Activated T-helper 1 cell treated with anti-CD3 and anti-CD28 coated beads, Interleukin-12 subunit alpha, Interleukin-12 subunit beta, Interleukin-2, Interleukin-4 antibody, amounts not matched to agents 30 ng/mL and 10 ng/mL and 1 ng/mL, durations not matched to agents 14 hours and 24 hours and 36 hours (primary cell): ENCODE measurements at regions of chr2 and their contacts with region 1.

Region 1: DNA sequence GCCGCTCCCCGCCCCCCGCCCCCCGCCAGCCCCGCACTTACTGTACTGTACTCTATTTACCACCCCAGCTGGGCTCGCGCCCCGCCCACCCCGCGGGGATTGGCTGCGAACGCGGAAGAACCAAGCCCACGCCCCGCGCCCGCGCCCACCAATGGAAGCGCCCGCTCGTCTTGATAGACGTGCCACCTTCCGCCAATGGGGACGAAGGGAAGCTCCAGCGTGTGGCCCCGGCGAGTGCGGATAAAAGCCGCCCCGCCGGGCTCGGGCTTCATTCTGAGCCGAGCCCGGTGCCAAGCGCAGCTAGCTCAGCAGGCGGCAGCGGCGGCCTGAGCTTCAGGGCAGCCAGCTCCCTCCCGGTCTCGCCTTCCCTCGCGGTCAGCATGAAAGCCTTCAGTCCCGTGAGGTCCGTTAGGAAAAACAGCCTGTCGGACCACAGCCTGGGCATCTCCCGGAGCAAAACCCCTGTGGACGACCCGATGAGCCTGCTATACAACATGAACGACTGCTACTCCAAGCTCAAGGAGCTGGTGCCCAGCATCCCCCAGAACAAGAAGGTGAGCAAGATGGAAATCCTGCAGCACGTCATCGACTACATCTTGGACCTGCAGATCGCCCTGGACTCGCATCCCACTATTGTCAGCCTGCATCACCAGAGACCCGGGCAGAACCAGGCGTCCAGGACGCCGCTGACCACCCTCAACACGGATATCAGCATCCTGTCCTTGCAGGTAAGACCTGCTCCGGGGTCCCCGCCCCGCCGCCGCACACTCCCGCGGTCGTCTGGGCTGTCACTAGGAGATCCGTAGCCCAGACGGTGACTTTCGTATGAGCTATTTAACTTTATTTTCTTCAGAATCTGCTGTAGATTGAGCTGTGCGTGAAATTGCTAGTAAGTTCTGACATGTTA is at the start of gene ID2:
- DNase-seq: peak; percentile 99
- H3K4me3 Mint-ChIP-seq: peak within 1 kb of the TSS; percentile 99
- H3K27ac Mint-ChIP-seq: peak within 1 kb of the TSS; percentile 97
- H3K4me1 Mint-ChIP-seq: peaks cover 41% of the 10 kb centered on the region
- H3K27me3 Mint-ChIP-seq: peaks cover 14% of the 10 kb centered on the region
- total RNA-seq, gene ID2: 301 and 306 TPM in 2 replicates

Region 2: GRCh38 chr2:7118606-7119503 is 1563.2 kb before region 1 on chr2:
- intact Hi-C with region 1: loop called (anchors 2 kb)
- DNase-seq: no peak
- H3K4me3 Mint-ChIP-seq: no peak overlapping the region
- H3K27ac Mint-ChIP-seq: no peak overlapping the region
- H3K4me1 Mint-ChIP-seq: no peaks in the 10 kb centered on the region
- H3K27me3 Mint-ChIP-seq: peaks cover 3% of the 10 kb centered on the region

Region 3: GRCh38 chr2:7567646-7568045 is 1114.4 kb before region 1 on chr2:
- intact Hi-C with region 1: loop called (anchors 1 kb)
- DNase-seq: peak; percentile 47
- H3K4me3 Mint-ChIP-seq: peak overlapping the region; percentile 25
- H3K27ac Mint-ChIP-seq: peak overlapping the region; percentile 90
- H3K4me1 Mint-ChIP-seq: peaks cover 59% of the 10 kb centered on the region
- H3K27me3 Mint-ChIP-seq: no peaks in the 10 kb centered on the region

Region 4: DNA sequence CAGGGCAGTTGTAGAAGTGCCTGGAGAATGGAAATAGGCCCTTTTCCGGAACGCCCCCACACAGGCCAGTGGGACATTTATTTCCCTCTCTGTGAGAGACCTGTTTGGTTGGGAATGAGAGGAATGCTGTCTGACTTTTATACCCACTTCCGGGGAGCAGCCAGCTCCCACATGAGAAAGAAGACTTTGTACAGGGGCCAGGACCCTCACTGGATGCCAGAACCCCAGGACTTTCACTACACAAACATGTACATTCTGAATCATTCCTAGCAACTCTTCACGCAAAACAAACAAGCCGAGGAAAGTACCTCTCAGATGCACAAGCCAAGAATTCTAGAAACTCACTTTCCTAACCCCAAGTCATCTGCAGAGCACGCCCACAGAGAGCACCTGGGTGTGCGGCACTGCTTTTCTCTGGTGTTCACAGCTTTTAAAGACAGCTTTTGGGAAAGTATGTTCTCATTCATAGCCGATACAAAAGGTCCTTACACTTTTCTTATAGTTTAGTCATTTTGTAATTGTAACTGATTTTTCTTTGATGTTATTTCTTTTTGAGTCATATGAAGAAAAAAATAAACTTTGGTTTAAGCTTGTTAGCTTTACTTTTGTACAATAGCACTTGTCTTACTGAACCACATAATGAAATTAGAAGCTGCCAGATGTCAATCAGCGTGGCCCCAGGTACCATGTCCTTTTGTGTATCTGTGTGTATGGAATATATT is 856.3 kb before region 1 on chr2:
- intact Hi-C with region 1: loop called (anchors 1 kb)
- DNase-seq: peak; percentile 55
- H3K4me3 Mint-ChIP-seq: peak overlapping the region; percentile 23
- H3K27ac Mint-ChIP-seq: peak overlapping the region; percentile 97
- H3K4me1 Mint-ChIP-seq: peaks cover 41% of the 10 kb centered on the region
- H3K27me3 Mint-ChIP-seq: peaks cover 4% of the 10 kb centered on the region

Region 5: DNA sequence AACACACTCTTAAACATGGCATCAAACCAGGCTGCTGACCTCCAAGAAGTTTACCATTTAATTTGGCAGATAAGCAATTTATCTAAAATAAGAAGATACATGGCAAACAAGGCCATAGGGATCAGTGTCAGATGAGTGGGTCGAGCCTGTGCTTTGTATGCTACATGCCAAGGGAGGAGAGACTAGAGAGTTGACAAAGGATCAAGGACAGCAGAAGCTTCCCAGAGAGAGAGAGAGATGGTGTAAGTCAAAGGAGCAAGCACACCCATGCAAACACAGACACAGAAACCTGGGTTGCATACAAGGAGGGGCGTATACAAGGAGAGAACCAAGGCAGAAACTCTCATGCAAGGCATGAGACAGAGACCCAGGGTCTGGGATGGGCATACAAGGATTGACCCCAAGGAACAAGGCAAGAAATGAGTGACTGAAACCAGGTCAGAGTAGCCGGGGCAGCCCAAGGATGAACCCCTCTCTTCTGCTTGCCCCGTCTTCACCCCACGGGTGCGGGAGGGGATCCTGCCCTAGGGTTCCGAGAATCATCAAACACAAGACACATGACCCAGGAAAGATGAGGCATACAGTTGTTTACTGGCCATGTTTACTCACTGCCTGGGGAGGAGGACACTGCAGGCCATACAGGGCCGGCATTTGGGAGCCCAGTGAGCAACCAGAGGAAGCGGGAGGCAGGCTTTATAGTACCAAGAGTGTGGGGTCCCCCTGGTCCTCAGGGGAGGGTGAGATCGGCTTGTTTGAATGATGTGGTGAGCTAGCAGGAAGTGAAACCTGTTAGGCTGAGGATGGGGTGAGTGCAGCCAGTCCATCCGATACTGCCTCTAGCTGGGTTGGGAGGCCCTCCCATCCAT is 529.4 kb before region 1 on chr2:
- intact Hi-C with region 1: loop called (anchors 1 kb)
- DNase-seq: no peak
- H3K4me3 Mint-ChIP-seq: no peak overlapping the region
- H3K27ac Mint-ChIP-seq: peak overlapping the region; percentile 62
- H3K4me1 Mint-ChIP-seq: peaks cover 38% of the 10 kb centered on the region
- H3K27me3 Mint-ChIP-seq: no peaks in the 10 kb centered on the region

Region 6: GRCh38 chr2:8488001-8488738 is 193.9 kb before region 1 on chr2:
- intact Hi-C with region 1: loop called (anchors 10 kb)
- DNase-seq: peak; percentile 57
- H3K4me3 Mint-ChIP-seq: peak overlapping the region; percentile 75
- H3K27ac Mint-ChIP-seq: peak overlapping the region; percentile 86
- H3K4me1 Mint-ChIP-seq: peaks cover 61% of the 10 kb centered on the region
- H3K27me3 Mint-ChIP-seq: no peaks in the 10 kb centered on the region

Region 7: DNA sequence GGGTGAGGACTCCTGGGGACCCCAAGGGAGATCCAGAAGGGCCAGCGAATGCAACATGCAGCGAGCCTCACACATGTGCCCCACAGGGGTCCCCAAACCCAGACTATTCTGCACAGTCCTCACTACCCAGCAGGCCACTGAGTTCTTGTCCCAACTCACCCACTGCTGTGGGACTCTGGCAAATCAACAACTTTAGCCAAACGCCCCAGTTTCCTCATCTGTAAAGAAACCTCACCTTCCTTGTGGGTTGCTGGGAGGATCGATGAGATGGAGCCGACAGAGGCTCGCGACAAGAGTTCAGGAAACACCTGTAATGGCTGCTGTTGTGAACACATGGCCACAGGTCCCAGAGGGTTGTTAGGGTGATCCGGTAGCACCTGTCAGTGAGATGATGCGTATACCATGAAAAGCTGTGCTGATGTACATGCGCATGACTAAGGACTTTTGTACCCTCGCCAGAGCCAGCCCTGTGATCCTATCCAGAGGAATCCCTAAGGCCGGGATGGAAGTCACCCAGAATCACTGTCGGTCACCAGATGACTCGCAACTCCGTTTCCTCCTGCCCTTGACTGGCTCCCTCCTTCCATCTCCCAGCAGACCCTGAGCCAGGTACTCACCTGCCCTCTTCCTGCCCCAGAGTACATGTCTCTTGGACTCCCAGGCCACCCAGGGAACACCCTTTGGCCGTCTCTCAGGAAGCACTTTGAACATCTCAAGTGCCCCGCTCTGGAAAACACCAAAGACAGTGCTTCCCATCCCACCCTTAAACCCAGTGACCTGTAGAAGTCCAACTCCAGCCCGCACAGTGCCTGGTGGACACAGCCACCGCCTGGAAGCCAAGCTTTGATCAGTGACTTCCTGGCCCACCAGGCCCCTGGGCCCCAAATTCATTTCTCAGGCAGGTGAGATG is 103.4 kb before region 1 on chr2:
- intact Hi-C with region 1: no loop called
- DNase-seq: no peak
- H3K4me3 Mint-ChIP-seq: no peak overlapping the region
- H3K27ac Mint-ChIP-seq: no peak overlapping the region
- H3K4me1 Mint-ChIP-seq: peaks cover 50% of the 10 kb centered on the region
- H3K27me3 Mint-ChIP-seq: peaks cover 3% of the 10 kb centered on the region

Region 8: DNA sequence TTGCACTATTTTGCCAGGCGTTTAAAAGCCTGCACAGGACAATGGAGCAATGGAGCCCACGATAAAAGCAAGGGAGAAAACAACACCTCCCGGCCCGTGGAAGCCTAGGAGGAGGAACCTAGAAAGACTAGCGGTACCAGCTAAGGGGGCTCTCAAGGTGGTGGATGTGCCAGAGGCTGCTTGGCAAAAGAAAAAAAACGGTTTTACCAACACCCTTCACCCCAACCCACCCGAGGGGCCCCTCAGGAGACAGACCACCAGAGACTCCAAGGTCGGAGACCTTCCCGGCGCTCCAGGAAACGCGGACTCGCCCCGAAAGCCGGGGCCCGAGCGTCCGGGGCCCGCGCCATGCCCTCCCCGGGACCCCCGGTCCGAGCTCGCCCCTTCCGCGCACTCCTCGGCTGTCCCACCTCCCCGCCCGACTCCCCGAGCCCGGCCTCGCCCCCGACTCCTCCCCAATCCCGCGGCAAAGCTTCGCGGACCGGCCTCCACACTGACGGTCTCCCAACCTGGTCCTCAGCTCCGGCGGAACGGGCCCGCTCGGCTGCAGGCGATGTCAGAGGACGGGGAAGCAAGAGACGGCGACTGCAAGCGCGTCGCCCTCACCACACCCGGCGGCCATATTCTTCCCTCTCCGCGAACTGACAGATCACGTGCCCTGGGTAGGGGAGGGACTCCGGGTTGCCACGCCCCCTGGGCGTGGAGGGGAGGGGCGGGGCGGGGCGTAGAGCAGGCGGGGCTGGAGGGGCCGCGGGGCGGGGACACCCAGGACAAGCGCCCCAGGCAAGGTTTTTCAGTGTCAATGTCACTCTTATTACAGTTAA is 155.1 kb after region 1 on chr2 and contains the start of gene KIDINS220:
- intact Hi-C with region 1: loop called (anchors 5 kb)
- DNase-seq: peak; percentile 72
- H3K4me3 Mint-ChIP-seq: peak within 1 kb of the TSS; percentile 100
- H3K27ac Mint-ChIP-seq: peak within 1 kb of the TSS; percentile 96
- H3K4me1 Mint-ChIP-seq: peaks cover 31% of the 10 kb centered on the region
- H3K27me3 Mint-ChIP-seq: no peaks in the 10 kb centered on the region
- total RNA-seq, gene KIDINS220: 24.3 and 24.5 TPM in 2 replicates